Tibial artery (tissue), 4 donors: ENCODE measurements at regions of chr6 and their contacts with region 1.

Region 1: DNA sequence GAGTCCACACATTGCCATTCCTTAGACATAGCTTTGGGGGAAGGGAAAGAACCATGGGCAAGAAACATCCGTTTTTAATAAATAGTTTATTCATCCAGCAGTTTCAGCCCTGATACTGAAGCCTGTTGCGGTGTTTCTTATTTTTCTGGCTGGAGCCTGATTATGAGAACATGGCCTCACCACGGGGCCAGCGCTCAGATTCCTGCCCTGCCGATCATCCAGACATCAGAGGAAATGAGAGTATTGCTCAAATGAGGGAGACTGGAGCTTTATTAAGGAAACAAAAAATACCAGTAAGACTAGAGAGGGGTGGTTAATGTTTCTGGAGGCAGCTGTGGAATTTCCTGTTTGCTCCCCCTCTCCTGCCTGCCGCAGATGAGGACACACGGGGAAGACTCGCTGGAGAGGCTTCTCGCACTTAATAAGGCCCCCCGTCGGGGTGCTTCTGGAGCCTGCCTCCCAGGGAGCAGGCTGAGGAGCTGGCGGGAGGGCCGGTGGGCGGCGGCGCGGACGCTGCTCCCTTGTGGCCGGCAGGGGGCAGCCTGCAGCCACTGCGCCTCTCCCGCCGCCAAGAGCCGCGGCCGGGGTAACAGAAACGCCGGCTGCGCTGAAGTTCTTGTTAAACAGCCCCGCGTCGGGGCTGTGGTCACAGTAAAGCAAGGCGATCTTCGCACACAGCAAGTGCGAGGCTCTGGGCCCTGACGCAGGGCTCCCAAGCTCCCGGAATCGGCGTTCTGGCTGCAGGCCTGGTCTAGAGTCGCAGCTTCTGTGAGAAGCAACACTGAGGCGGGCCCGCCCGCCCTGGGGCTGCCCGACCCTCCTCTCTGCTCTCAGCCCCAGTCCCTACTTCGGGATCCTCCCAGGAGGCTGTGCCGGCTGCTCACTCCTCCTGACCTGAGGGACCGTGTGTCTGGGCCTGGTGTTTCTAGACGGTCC is 17.5 kb downstream of the LEMD2 start:
- DNase-seq: peak; percentile 70 to 86
- H3K4me3 ChIP-seq: peak overlapping the region; percentile 3 to 31
- H3K27ac ChIP-seq: peak overlapping the region; percentile 69 to 76
- H3K4me1 ChIP-seq: peaks cover 0 to 52% (median 40%) of the 10 kb centered on the region in 4 donors
- H3K27me3 ChIP-seq: no peaks in the 10 kb centered on the region
- CTCF ChIP-seq: peak; percentile 92 to 98

Region 2: GRCh38 chr6:33711140-33712129 is 60.0 kb before region 1 on chr6 and contains the start of gene UQCC2:
- intact Hi-C with region 1: loop called (anchors 10 kb)
- DNase-seq: peak; percentile 96 to 97
- H3K4me3 ChIP-seq: peak within 1 kb of the TSS; percentile 67 to 77
- H3K27ac ChIP-seq: peak within 1 kb of the TSS; percentile 72 to 77
- H3K4me1 ChIP-seq: peaks cover 0 to 9% (median 7%) of the 10 kb centered on the region in 4 donors
- H3K27me3 ChIP-seq: no peaks in the 10 kb centered on the region
- CTCF ChIP-seq: peak; percentile 63

Region 3: GRCh38 chr6:33727932-33728331 is 43.5 kb before region 1 on chr6:
- intact Hi-C with region 1: no loop called
- DNase-seq: no peak
- H3K4me3 ChIP-seq: no peak overlapping the region
- H3K27ac ChIP-seq: no peak overlapping the region
- H3K4me1 ChIP-seq: no peaks in the 10 kb centered on the region
- H3K27me3 ChIP-seq: no peaks in the 10 kb centered on the region
- CTCF ChIP-seq: no peak

Region 4: DNA sequence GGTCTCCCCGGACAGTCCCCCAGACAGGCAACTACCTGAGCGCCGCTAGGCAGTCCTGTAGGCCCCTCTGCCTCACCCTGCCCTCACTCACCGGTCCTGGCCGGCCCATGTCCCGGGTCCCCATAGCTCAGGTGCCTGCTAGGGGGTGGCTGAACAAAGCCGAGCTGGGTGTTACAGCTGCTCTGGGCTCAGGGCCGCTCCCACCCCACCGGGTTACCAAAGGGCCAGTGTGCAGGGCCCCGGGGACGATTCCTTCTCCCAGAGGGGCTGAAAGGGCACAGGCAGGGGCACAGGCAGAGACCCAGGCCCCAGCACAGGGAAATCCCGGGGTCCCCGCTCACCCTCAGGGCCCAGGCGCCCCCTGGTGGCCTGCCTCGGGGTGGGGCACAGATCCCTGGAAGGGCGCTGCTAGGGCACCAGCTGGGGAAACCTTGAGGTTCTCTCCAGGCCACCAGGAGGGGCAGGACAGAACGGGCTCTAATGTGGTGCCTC is 256.1 kb after region 1 on chr6:
- intact Hi-C with region 1: loop called (anchors 10 kb)
- DNase-seq: no peak
- H3K4me3 ChIP-seq: no peak overlapping the region
- H3K27ac ChIP-seq: no peak overlapping the region
- H3K4me1 ChIP-seq: no peaks in the 10 kb centered on the region
- H3K27me3 ChIP-seq: peaks cover 0 to 60% of the 10 kb centered on the region in 2 donors
- CTCF ChIP-seq: peak; percentile 61 to 68

Region 5: GRCh38 chr6:34143884-34144580 is 372.6 kb after region 1 on chr6:
- intact Hi-C with region 1: no loop called
- DNase-seq: no peak
- H3K4me3 ChIP-seq: peak overlapping the region; percentile 36 to 53
- H3K27ac ChIP-seq: no peak overlapping the region
- H3K4me1 ChIP-seq: peaks cover 0 to 38% (median 29%) of the 10 kb centered on the region in 4 donors
- H3K27me3 ChIP-seq: peaks cover 0 to 92% of the 10 kb centered on the region in 2 donors
- CTCF ChIP-seq: no peak

Region 6: GRCh38 chr6:34154668-34155447 is 383.4 kb after region 1 on chr6:
- intact Hi-C with region 1: loop called (anchors 5 kb)
- DNase-seq: peak in 1 of 2 donors; percentile 66
- H3K4me3 ChIP-seq: peak overlapping the region in 1 of 2 donors; percentile 16
- H3K27ac ChIP-seq: no peak overlapping the region
- H3K4me1 ChIP-seq: peaks cover 0 to 10% (median 7%) of the 10 kb centered on the region in 4 donors
- H3K27me3 ChIP-seq: peaks cover 0 to 66% of the 10 kb centered on the region in 2 donors
- CTCF ChIP-seq: peak; percentile 94 to 98